ENCODE measurements at regions of chr16 and their contacts with region 1.

Region 1: GRCh38 chr16:17377360-17378324 is 93.1 kb downstream of the XYLT1 start:
- DNase-seq: no peak
- ATAC-seq: peak; percentile 85
- H3K4me3 Mint-ChIP-seq: peak overlapping the region; percentile 56
- H3K27ac Mint-ChIP-seq: peak overlapping the region; percentile 88
- H3K4me1 Mint-ChIP-seq: peaks cover 78% of the 10 kb centered on the region
- H3K27me3 Mint-ChIP-seq: no peaks in the 10 kb centered on the region
- CTCF ChIP-seq: no peak

Region 2: DNA sequence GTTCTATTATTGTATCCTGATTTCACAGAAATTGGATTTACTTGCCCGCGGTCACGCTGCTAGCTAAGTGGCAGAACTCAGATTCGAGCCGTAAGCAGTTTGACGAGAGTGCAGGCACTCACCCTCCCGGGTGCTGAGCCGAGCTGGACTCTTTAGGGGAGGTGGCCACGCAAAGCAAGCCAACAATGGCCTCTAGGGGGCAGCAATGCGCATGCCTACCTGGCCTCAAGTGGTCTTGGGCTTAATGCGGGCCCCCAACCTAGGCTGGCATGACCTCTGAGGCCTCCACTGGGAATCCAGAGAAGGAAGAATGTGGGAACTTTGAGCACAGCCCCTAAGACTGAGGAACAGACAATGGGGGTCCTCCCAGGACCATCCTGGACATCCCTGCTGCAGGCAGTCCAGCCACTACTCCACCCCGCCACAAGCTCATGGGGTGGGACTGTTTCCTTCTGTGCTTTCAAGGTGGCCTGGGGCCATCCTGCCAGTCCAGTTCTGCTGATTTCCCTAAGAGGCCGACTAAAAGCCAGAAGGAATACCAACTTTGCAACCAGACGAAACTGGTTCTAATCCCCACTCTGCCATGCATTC is 183.4 kb before region 1 on chr16:
- CTCF ChIA-PET with region 1: no interaction called
- POLR2A ChIA-PET with region 1: no interaction called
- intact Hi-C with region 1: loop called (anchors 1 kb)
- DNase-seq: peak; percentile 52
- ATAC-seq: peak; percentile 56
- H3K4me3 Mint-ChIP-seq: no peak overlapping the region
- H3K27ac Mint-ChIP-seq: no peak overlapping the region
- H3K4me1 Mint-ChIP-seq: no peaks in the 10 kb centered on the region
- H3K27me3 Mint-ChIP-seq: no peaks in the 10 kb centered on the region
- CTCF ChIP-seq: no peak

Region 3: GRCh38 chr16:17277977-17278381 is 99.7 kb before region 1 on chr16:
- CTCF ChIA-PET with region 1: interaction called, 6 read pairs
- POLR2A ChIA-PET with region 1: no interaction called
- intact Hi-C with region 1: loop called (anchors 1 kb)
- DNase-seq: peak; percentile 25
- ATAC-seq: peak; percentile 55
- H3K4me3 Mint-ChIP-seq: peak overlapping the region; percentile 32
- H3K27ac Mint-ChIP-seq: no peak overlapping the region
- H3K4me1 Mint-ChIP-seq: peaks cover 77% of the 10 kb centered on the region
- H3K27me3 Mint-ChIP-seq: no peaks in the 10 kb centered on the region
- CTCF ChIP-seq: no peak

Region 4: DNA sequence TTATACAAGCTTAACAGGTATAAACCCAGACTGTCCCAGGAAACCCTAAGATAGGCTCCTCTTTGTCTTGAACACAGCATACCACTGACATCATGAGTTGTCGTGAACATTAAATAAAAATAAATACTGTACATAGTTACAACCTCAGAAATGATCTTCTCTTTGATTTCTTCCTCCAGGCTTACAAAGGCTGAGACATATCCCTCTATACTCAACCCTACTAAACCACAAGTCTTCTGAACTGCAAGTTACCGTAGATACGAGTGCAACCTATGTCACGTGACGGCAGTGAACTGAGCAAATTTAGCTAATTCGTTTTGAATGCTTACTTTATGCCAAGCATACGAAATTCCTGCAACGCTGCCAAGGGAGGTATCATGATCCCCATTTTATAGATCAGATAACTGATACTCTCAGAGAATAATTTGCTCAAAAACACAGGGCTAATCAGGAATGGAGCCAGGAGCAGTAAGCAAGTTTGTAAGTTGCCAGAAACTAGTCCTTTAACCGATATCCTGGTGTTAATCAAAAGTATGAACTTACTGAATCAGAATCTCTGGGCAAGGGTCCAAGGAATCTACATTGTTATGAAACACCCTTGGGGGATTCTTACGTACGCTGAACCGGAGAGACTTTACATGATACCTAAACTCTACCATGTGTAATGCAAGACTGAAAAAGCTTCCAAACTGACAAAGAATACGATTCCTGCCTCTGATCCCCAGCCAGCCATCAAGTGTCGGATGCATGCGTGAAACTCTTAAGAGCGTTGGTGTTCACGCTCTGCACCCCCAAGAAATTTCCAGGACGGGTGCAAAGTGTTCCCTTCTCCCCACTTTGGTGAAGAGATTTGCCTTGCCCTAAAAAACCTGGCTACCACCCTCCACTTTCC is 13.1 kb before region 1 on chr16:
- CTCF ChIA-PET with region 1: interaction called, 5 read pairs
- POLR2A ChIA-PET with region 1: interaction called, 12 read pairs
- intact Hi-C with region 1: loop called (anchors 1 kb)
- DNase-seq: no peak
- ATAC-seq: no peak
- H3K4me3 Mint-ChIP-seq: no peak overlapping the region
- H3K27ac Mint-ChIP-seq: peak overlapping the region; percentile 51
- H3K4me1 Mint-ChIP-seq: peaks cover 98% of the 10 kb centered on the region
- H3K27me3 Mint-ChIP-seq: no peaks in the 10 kb centered on the region
- CTCF ChIP-seq: no peak

Region 5: GRCh38 chr16:17416461-17417311 is 39.0 kb after region 1 on chr16:
- CTCF ChIA-PET with region 1: interaction called, 4 read pairs
- POLR2A ChIA-PET with region 1: interaction called, 31 read pairs
- intact Hi-C with region 1: loop called (anchors 1 kb)
- DNase-seq: peak; percentile 57
- ATAC-seq: peak; percentile 86
- H3K4me3 Mint-ChIP-seq: peak overlapping the region; percentile 77
- H3K27ac Mint-ChIP-seq: peak overlapping the region; percentile 95
- H3K4me1 Mint-ChIP-seq: peaks cover 68% of the 10 kb centered on the region
- H3K27me3 Mint-ChIP-seq: no peaks in the 10 kb centered on the region
- CTCF ChIP-seq: no peak

Region 6: GRCh38 chr16:17564841-17565240 is 187.2 kb after region 1 on chr16:
- CTCF ChIA-PET with region 1: no interaction called
- POLR2A ChIA-PET with region 1: interaction called, 10 read pairs
- intact Hi-C with region 1: no loop called
- DNase-seq: no peak
- ATAC-seq: no peak
- H3K4me3 Mint-ChIP-seq: no peak overlapping the region
- H3K27ac Mint-ChIP-seq: no peak overlapping the region
- H3K4me1 Mint-ChIP-seq: no peaks in the 10 kb centered on the region
- H3K27me3 Mint-ChIP-seq: peaks cover 17% of the 10 kb centered on the region
- CTCF ChIP-seq: no peak

Region 7: GRCh38 chr16:19167710-19168370 is 1790.2 kb after region 1 on chr16 and contains the start of gene SYT17:
- CTCF ChIA-PET with region 1: no interaction called
- POLR2A ChIA-PET with region 1: no interaction called
- intact Hi-C with region 1: no loop called
- DNase-seq: peak; percentile 69
- ATAC-seq: peak; percentile 92
- H3K4me3 Mint-ChIP-seq: peak within 1 kb of the TSS; percentile 82
- H3K27ac Mint-ChIP-seq: no peak within 1 kb of the TSS
- H3K4me1 Mint-ChIP-seq: peaks cover 24% of the 10 kb centered on the region
- H3K27me3 Mint-ChIP-seq: no peaks in the 10 kb centered on the region
- CTCF ChIP-seq: no peak
- total RNA-seq, gene SYT17: 21.2 and 25.4 TPM in 2 replicates